Activated CD8-positive, alpha-beta T cell treated with anti-CD3 and anti-CD28 coated beads for 36 hours (primary cell): ENCODE measurements at regions of chr12 and their contacts with region 1.

Region 1: GRCh38 chr12:92408072-92408900 is 262.6 kb upstream of the BTG1 start:
- DNase-seq: peak; percentile 81
- ATAC-seq: peak; percentile 50
- H3K4me3 Mint-ChIP-seq: no peak overlapping the region
- H3K27ac Mint-ChIP-seq: peak overlapping the region; percentile 63
- H3K4me1 Mint-ChIP-seq: peaks cover 41% of the 10 kb centered on the region
- H3K27me3 Mint-ChIP-seq: no peaks in the 10 kb centered on the region
- CTCF ChIP-seq: peak; percentile 58

Region 2: GRCh38 chr12:92363295-92364146 is 44.8 kb before region 1 on chr12:
- CTCF ChIA-PET with region 1: interaction called, 11 read pairs
- POLR2A ChIA-PET with region 1: interaction called, 9 read pairs
- intact Hi-C with region 1: no loop called
- DNase-seq: peak; percentile 56
- ATAC-seq: peak; percentile 54
- H3K4me3 Mint-ChIP-seq: peak overlapping the region; percentile 77
- H3K27ac Mint-ChIP-seq: peak overlapping the region; percentile 93
- H3K4me1 Mint-ChIP-seq: peaks cover 44% of the 10 kb centered on the region
- H3K27me3 Mint-ChIP-seq: no peaks in the 10 kb centered on the region
- CTCF ChIP-seq: no peak

Region 3: GRCh38 chr12:92421701-92422100 is 13.4 kb after region 1 on chr12:
- CTCF ChIA-PET with region 1: interaction called, 52 read pairs
- POLR2A ChIA-PET with region 1: interaction called, 7 read pairs
- intact Hi-C with region 1: no loop called
- DNase-seq: no peak
- ATAC-seq: no peak
- H3K4me3 Mint-ChIP-seq: no peak overlapping the region
- H3K27ac Mint-ChIP-seq: no peak overlapping the region
- H3K4me1 Mint-ChIP-seq: peaks cover 30% of the 10 kb centered on the region
- H3K27me3 Mint-ChIP-seq: no peaks in the 10 kb centered on the region
- CTCF ChIP-seq: no peak

Region 4: GRCh38 chr12:92469837-92470236 is 61.6 kb after region 1 on chr12:
- CTCF ChIA-PET with region 1: no interaction called
- POLR2A ChIA-PET with region 1: no interaction called
- intact Hi-C with region 1: loop called (anchors 5 kb)
- DNase-seq: no peak
- ATAC-seq: no peak
- H3K4me3 Mint-ChIP-seq: no peak overlapping the region
- H3K27ac Mint-ChIP-seq: no peak overlapping the region
- H3K4me1 Mint-ChIP-seq: peaks cover 37% of the 10 kb centered on the region
- H3K27me3 Mint-ChIP-seq: no peaks in the 10 kb centered on the region
- CTCF ChIP-seq: no peak

Region 5: DNA sequence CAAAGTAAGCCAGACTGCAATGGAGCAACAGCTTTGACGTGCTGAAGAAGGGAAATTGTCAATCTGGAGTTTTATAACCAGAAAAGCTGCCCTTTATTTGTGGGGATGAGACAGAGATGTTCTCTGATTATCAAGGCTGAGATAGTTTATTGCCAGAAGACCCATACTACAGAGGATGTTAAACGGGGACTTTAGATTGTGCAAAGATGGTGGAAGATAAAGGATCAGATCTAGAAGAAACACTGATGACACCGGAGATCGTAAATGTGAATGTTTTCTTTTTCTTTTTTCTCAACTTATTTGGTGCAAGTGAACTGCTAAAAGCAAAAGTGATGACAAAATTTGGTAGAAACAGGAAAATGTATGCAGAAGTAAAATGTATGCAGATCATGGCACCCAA is 116.2 kb after region 1 on chr12:
- CTCF ChIA-PET with region 1: no interaction called
- POLR2A ChIA-PET with region 1: no interaction called
- intact Hi-C with region 1: no loop called
- DNase-seq: no peak
- ATAC-seq: no peak
- H3K4me3 Mint-ChIP-seq: no peak overlapping the region
- H3K27ac Mint-ChIP-seq: peak overlapping the region; percentile 27
- H3K4me1 Mint-ChIP-seq: peaks cover 27% of the 10 kb centered on the region
- H3K27me3 Mint-ChIP-seq: no peaks in the 10 kb centered on the region
- CTCF ChIP-seq: no peak

Region 6: DNA sequence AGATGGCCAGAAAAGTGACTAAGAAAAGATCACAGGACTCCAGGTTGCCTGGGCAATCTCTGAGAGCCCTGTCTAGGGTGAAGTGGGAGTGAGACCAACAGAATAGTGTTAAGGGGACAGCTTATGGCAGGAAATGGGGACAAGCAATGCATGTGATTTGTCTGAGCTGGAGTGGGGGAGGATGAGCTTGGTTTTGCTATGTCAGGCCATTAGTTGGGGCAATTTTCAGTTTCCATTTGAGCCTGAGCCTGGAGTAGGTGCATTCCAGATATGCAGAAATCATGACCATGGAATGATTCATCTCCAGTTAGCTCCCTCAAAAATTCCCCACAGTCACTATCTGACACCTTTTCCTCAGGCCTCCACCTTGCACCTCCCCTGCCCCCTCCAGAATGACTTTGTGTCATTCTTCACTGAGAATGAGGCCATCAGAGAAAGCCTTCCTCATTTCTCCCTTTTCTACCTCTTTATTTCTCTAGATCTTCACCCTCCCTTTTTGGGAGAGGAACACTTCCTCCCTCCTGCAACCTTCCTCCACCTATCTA is 143.6 kb after region 1 on chr12:
- CTCF ChIA-PET with region 1: interaction called, 4 read pairs
- POLR2A ChIA-PET with region 1: interaction called, 5 read pairs
- intact Hi-C with region 1: loop called (anchors 5 kb)
- DNase-seq: peak; percentile 77
- ATAC-seq: peak; percentile 86
- H3K4me3 Mint-ChIP-seq: no peak overlapping the region
- H3K27ac Mint-ChIP-seq: no peak overlapping the region
- H3K4me1 Mint-ChIP-seq: peaks cover 27% of the 10 kb centered on the region
- H3K27me3 Mint-ChIP-seq: no peaks in the 10 kb centered on the region
- CTCF ChIP-seq: no peak